ENCODE measurements at regions of chr12 and their contacts with region 1.

Region 1: DNA sequence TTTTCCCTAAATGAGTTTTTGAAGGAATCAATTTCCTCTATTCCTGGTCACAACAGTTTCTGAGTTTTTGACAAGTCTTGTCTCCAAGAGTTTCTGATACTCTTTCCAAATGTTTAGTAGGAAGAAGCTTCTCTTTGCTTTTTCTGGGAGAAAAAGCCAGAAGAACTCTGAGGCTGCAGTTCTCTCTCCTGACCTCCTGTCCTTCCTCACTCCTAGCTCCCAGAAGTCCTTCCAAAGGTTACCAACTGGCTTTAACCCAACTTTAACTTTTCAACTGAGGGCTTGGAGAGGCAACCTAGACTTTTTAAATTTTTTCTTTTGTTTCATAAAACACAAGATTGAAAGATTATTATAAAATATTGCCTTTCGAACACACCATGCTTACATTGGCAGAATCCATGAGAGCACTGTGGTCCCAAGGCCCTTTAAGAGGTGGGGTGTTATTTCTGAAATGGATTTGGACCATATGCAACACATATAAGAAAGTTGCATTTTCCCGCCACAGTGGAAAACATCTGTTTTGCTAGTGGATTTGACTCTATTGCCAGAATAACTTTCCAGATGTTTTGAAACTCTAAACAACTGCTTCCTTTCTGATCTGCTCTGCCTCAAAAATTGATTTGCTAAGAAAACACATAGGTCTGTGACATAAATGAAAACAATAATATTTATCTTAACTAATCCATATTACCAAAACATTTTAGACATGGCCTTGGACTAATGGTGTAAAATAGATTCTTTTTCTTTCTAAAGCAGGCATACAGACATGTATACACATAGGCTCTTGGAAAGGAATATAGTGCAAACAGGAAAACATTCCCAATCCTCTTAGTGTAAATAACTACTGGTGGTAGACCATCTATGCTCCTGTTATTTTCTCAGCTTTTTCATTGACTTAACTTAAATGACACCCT is 22.3 kb upstream of the EPS8 start:
- DNase-seq: no peak
- ATAC-seq: no peak
- H3K4me3 ChIP-seq: no peak overlapping the region
- H3K27ac ChIP-seq: no peak overlapping the region
- H3K4me1 ChIP-seq: peaks cover 10% of the 10 kb centered on the region
- H3K27me3 ChIP-seq: no peaks in the 10 kb centered on the region
- CTCF ChIP-seq: no peak
- POLR2A ChIP-seq: no peak
- RAD21 ChIP-seq: no peak

Region 2: GRCh38 chr12:15546102-15546701 is 265.3 kb before region 1 on chr12:
- CTCF ChIA-PET with region 1: no interaction called
- POLR2A ChIA-PET with region 1: no interaction called
- dilution Hi-C with region 1: no loop called
- in situ Hi-C with region 1: no loop called
- intact Hi-C with region 1: no loop called
- DNase-seq: no peak
- ATAC-seq: no peak
- H3K4me3 ChIP-seq: no peak overlapping the region
- H3K27ac ChIP-seq: no peak overlapping the region
- H3K4me1 ChIP-seq: peaks cover 2% of the 10 kb centered on the region; the same call in 1 of the 2 replicates
- H3K27me3 ChIP-seq: no peaks in the 10 kb centered on the region
- CTCF ChIP-seq: no peak
- POLR2A ChIP-seq: no peak
- RAD21 ChIP-seq: no peak

Region 3: GRCh38 chr12:15827136-15827535 is 15.7 kb after region 1 on chr12:
- CTCF ChIA-PET with region 1: no interaction called
- POLR2A ChIA-PET with region 1: interaction called, 3 read pairs
- dilution Hi-C with region 1: no loop called
- in situ Hi-C with region 1: no loop called
- intact Hi-C with region 1: loop called (anchors 2 kb)
- DNase-seq: no peak
- ATAC-seq: no peak
- H3K4me3 ChIP-seq: no peak overlapping the region
- H3K27ac ChIP-seq: no peak overlapping the region
- H3K4me1 ChIP-seq: peaks cover 3% of the 10 kb centered on the region; the same call in 1 of the 2 replicates
- H3K27me3 ChIP-seq: no peaks in the 10 kb centered on the region
- CTCF ChIP-seq: no peak
- POLR2A ChIP-seq: no peak
- RAD21 ChIP-seq: no peak

Region 4: DNA sequence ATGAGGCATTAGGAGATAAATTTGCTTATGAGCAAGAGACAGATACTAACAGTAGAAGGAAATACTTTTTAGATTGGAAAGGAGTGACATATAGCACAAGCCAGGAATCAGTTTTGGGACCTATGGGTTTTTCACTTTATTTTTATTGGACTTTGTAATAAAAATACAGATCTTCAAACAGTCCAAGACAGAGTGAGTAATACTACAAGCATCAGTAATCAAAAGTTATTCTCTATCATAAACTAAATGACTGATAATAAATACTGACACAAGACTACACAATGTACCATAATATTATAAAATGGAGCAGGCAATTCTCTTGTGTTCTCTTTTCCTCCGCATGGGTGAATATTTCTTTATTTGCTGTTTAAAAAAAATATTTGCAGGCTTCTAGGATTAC is 185.5 kb after region 1 on chr12:
- CTCF ChIA-PET with region 1: no interaction called
- POLR2A ChIA-PET with region 1: no interaction called
- dilution Hi-C with region 1: no loop called
- in situ Hi-C with region 1: no loop called
- intact Hi-C with region 1: no loop called
- DNase-seq: no peak
- ATAC-seq: peak; percentile 63
- H3K4me3 ChIP-seq: no peak overlapping the region
- H3K27ac ChIP-seq: no peak overlapping the region
- H3K4me1 ChIP-seq: peaks cover 7% of the 10 kb centered on the region; the same call in 1 of the 2 replicates
- H3K27me3 ChIP-seq: no peaks in the 10 kb centered on the region
- CTCF ChIP-seq: no peak
- POLR2A ChIP-seq: no peak
- RAD21 ChIP-seq: no peak

Region 5: GRCh38 chr12:16037533-16037932 is 226.1 kb after region 1 on chr12:
- CTCF ChIA-PET with region 1: no interaction called
- POLR2A ChIA-PET with region 1: no interaction called
- dilution Hi-C with region 1: no loop called
- in situ Hi-C with region 1: no loop called
- intact Hi-C with region 1: no loop called
- DNase-seq: no peak
- ATAC-seq: no peak
- H3K4me3 ChIP-seq: no peak overlapping the region
- H3K27ac ChIP-seq: no peak overlapping the region
- H3K4me1 ChIP-seq: no peaks in the 10 kb centered on the region
- H3K27me3 ChIP-seq: no peaks in the 10 kb centered on the region
- CTCF ChIP-seq: no peak
- POLR2A ChIP-seq: no peak
- RAD21 ChIP-seq: no peak